CD4-positive, alpha-beta memory T cell (primary cell): ENCODE measurements at regions of chr6 and their contacts with region 1.

Region 1: DNA sequence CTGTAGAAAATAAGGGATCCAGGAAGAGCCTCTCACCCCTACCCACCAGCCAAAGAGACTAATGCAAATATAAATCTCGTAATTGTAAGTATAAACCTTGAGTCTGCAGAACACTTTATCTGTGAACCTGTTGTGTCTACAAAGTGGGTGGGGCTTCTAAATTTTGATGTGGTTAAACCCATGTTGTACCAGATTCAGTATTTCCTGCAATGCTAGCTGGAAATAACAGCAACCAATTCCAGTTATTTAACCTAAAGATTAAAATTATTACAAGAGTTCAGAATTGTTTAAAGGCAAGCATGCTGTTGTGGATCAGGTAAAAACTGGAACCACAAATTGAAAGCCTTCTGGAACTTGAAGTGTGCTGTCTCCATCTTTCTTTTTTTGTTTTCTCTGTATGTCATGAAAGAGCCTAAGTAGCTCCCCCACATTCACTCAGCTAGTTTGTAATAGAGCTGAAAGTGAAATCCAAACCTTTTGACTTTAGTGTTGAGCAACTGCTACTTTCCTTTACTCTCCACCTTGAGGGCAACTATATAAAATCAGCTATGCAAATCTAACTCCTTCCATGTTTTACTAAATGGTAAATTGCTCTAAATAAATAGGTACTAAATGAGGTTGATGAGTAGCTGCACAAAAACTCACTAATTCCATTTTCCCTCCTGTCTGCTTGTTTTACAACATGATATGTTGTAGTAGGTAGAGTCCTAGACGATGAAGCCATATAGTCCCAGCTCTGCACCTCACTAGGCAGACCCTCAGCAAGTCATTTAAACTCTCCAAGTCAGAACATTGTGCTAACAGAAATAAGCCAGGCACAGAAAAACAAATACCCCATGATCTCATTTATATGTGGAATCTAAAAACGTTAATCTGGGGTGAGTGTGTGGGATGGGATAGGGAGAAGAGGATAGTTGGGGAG is 17.9 kb upstream of the THEMIS start:
- DNase-seq: peak; percentile 72 to 79 (median 75)
- H3K4me3 ChIP-seq: peak overlapping the region; percentile 59 to 68
- H3K4me3 Mint-ChIP-seq: peak overlapping the region; percentile 93 to 99 (median 96)
- H3K27ac ChIP-seq: peak overlapping the region; percentile 53
- H3K27ac Mint-ChIP-seq: peak overlapping the region; percentile 86 to 98 (median 94)
- H3K4me1 ChIP-seq: peaks cover 79% of the 10 kb centered on the region
- H3K4me1 Mint-ChIP-seq: peaks cover 53 to 89% (median 71%) of the 10 kb centered on the region in 4 donors
- H3K27me3 ChIP-seq: no peaks in the 10 kb centered on the region
- H3K27me3 Mint-ChIP-seq: no peaks in the 10 kb centered on the region

Region 2: GRCh38 chr6:127786109-127786508 is 132.7 kb before region 1 on chr6:
- CTCF ChIA-PET with region 1: no interaction called
- POLR2A ChIA-PET with region 1: no interaction called
- intact Hi-C with region 1: no loop called
- DNase-seq: no peak
- H3K4me3 ChIP-seq: no peak overlapping the region
- H3K4me3 Mint-ChIP-seq: no peak overlapping the region
- H3K27ac ChIP-seq: no peak overlapping the region
- H3K27ac Mint-ChIP-seq: peak overlapping the region in 1 of 7 donors; percentile 4
- H3K4me1 ChIP-seq: peaks cover 45% of the 10 kb centered on the region
- H3K4me1 Mint-ChIP-seq: peaks cover 52 to 90% (median 70%) of the 10 kb centered on the region in 4 donors
- H3K27me3 ChIP-seq: no peaks in the 10 kb centered on the region
- H3K27me3 Mint-ChIP-seq: no peaks in the 10 kb centered on the region

Region 3: GRCh38 chr6:127900935-127901334 is 17.8 kb before region 1 on chr6 and contains the start of gene THEMIS:
- CTCF ChIA-PET with region 1: interaction called, 5 read pairs
- POLR2A ChIA-PET with region 1: interaction called, 83 read pairs
- intact Hi-C with region 1: loop called (anchors 1 kb)
- DNase-seq: peak; percentile 66 to 73 (median 69)
- H3K4me3 ChIP-seq: peak within 1 kb of the TSS; percentile 66 to 72
- H3K4me3 Mint-ChIP-seq: peak within 1 kb of the TSS; percentile 98 to 100 (median 99)
- H3K27ac ChIP-seq: peak within 1 kb of the TSS; percentile 73
- H3K27ac Mint-ChIP-seq: peak within 1 kb of the TSS; percentile 90 to 98 (median 96)
- H3K4me1 ChIP-seq: peaks cover 68% of the 10 kb centered on the region
- H3K4me1 Mint-ChIP-seq: peaks cover 41 to 70% (median 56%) of the 10 kb centered on the region in 4 donors
- H3K27me3 ChIP-seq: no peaks in the 10 kb centered on the region
- H3K27me3 Mint-ChIP-seq: no peaks in the 10 kb centered on the region
- total RNA-seq, gene THEMIS: 58.1 to 58.7 TPM

Region 4: GRCh38 chr6:127938701-127939100 is 19.9 kb after region 1 on chr6:
- CTCF ChIA-PET with region 1: interaction called, 11 read pairs
- POLR2A ChIA-PET with region 1: interaction called, 77 read pairs
- intact Hi-C with region 1: loop called (anchors 1 kb)
- DNase-seq: peak in 3 of 5 donors; percentile 22 to 31 (median 30)
- H3K4me3 ChIP-seq: no peak overlapping the region
- H3K4me3 Mint-ChIP-seq: peak overlapping the region in 1 of 8 donors; percentile 64
- H3K27ac ChIP-seq: no peak overlapping the region
- H3K27ac Mint-ChIP-seq: peak overlapping the region in 6 of 7 donors; percentile 18 to 85 (median 72)
- H3K4me1 ChIP-seq: peaks cover 41% of the 10 kb centered on the region
- H3K4me1 Mint-ChIP-seq: peaks cover 30 to 55% (median 39%) of the 10 kb centered on the region in 4 donors
- H3K27me3 ChIP-seq: no peaks in the 10 kb centered on the region
- H3K27me3 Mint-ChIP-seq: no peaks in the 10 kb centered on the region

Region 5: GRCh38 chr6:127956260-127956874 is 37.6 kb after region 1 on chr6:
- CTCF ChIA-PET with region 1: no interaction called
- POLR2A ChIA-PET with region 1: interaction called, 18 read pairs
- intact Hi-C with region 1: loop called (anchors 1 kb)
- DNase-seq: no peak
- H3K4me3 ChIP-seq: no peak overlapping the region
- H3K4me3 Mint-ChIP-seq: no peak overlapping the region
- H3K27ac ChIP-seq: no peak overlapping the region
- H3K27ac Mint-ChIP-seq: no peak overlapping the region
- H3K4me1 ChIP-seq: peaks cover 41% of the 10 kb centered on the region
- H3K4me1 Mint-ChIP-seq: peaks cover 19 to 42% (median 30%) of the 10 kb centered on the region in 4 donors
- H3K27me3 ChIP-seq: no peaks in the 10 kb centered on the region
- H3K27me3 Mint-ChIP-seq: no peaks in the 10 kb centered on the region